ENCODE measurements at regions of chr19 and their contacts with region 1.

Region 1: DNA sequence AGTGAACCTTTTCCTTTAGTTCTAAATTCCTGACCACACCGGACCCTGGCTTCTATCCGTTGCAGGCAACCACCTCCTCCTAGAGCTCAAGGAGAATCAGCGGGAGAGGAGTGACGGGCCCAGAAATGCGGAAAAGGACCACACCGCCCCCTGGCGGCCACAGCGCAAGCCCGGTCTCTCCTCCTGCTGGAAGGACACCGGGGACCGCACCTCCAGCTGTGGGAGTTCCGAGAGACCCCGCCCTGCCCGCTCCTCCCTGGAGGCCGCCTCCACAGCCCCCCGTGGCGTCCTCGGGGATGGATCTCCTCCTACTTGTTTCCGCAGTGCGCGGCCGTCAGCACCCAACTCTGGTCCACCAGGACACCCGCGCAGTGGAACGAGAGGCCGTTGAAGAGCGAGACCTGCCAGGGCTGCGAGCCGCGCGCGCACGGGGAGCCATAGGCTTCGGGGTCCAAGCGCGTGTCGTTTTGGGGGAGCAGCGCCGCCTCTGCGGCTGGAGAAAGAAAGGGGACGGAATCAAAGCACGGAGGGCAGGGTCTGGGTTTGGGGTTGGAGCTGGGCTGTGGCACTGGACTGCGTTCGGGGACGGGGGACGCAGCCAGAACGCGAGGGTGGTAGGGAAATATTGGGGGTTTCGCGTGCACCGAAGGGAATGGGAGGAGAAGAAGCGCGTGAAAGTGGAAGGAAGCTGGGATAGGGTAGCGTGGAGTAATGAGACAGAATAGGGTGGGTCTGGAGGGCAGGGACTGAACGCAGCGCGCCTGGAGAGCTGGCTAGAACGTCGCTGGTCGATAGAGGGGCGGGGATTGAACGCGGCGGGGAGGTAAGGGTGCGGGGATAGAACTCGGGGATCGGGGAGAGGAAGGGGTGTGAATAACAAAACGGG is 2.5 kb downstream of the KLK10 start:
- DNase-seq: peak; percentile 87 to 98
- ATAC-seq: peak; percentile 63 to 84
- H3K4me3 ChIP-seq: peak overlapping the region; percentile 42
- H3K27ac ChIP-seq: peak overlapping the region in 1 of 2 experiments; percentile 27; a peak in 1 of 6 replicates
- H3K4me1 ChIP-seq: peaks cover 23% of the 10 kb centered on the region
- CTCF ChIP-seq: peak; percentile 84
- EP300 ChIP-seq: no peak
- POLR2A ChIP-seq: no peak
- RAD21 ChIP-seq: peak; percentile 84 to 89

Region 2: DNA sequence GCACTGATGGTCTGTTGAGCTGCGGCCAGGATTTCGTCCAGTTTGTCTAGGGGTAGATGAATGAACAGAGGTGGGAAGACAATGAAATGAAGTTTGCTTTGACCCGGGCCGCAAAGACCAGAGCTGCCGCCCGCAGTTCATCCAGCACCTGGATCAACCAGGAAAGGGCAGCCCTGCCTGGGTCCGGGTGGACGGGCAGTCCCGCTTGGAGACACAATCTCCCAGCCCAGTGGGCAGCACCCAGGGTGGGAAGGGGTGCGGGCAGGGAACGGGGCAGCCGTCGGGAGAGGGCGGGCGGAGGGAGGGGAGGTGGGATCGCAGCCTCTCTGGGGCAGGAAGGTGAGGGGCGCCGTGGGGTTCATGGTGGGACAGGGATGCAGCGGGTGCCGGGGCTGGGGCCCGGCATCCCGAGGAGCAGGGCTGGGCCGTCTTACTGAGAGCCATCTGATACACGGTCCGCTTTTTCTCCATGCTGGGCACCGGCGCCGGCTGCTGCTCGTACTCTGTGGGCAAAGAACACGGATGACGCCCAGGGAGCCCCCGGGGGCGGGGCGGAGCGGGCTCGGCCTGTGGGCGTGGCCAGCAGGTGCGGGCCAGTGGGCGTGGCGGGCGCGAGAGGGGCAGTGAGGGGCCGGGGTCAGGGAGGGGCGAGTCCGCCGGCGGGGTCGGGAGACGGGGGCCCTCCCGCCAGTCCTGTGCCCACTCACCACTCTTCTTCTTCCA is 330.6 kb before region 1 on chr19:
- CTCF ChIA-PET with region 1: no interaction called
- POLR2A ChIA-PET with region 1: no interaction called
- DNase-seq: no peak
- ATAC-seq: peak in 1 of 2 experiments; percentile 14; a peak in 1 of 6 replicates
- H3K4me3 ChIP-seq: 0 out of 3 replicates have a peak overlapping the region, but pooled peaks have one; percentile 12
- H3K27ac ChIP-seq: no peak overlapping the region
- H3K4me1 ChIP-seq: peaks cover 4% of the 10 kb centered on the region; the same call in 2 of the 3 replicates
- CTCF ChIP-seq: no peak
- EP300 ChIP-seq: no peak
- POLR2A ChIP-seq: no peak
- RAD21 ChIP-seq: no peak

Region 3: GRCh38 chr19:50750010-50750409 is 267.0 kb before region 1 on chr19:
- CTCF ChIA-PET with region 1: no interaction called
- POLR2A ChIA-PET with region 1: no interaction called
- DNase-seq: no peak
- ATAC-seq: no peak
- H3K4me3 ChIP-seq: no peak overlapping the region
- H3K27ac ChIP-seq: no peak overlapping the region
- H3K4me1 ChIP-seq: peaks cover 6% of the 10 kb centered on the region; the same call in 1 of the 3 replicates
- CTCF ChIP-seq: no peak
- EP300 ChIP-seq: no peak
- POLR2A ChIP-seq: no peak
- RAD21 ChIP-seq: no peak

Region 4: DNA sequence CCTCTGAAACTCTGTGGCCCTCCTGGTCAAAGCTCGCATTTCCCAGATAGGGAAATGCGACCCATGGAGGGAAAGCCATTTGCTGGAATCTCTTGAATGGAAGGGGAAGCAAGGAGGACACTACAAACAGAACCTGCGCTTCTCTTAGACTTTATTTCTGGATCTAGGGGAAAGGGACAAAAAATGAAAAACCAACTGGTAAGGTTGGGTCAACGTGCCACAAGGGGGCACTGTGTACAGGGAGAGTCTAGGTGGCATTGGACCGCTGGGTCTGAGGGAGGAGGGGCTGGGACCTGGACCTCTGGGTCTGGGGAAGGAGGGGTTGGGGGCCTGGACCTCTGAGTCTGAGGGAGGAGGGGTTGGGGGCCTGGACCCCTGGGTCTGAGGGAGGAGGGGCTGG is 110.8 kb before region 1 on chr19:
- CTCF ChIA-PET with region 1: no interaction called
- POLR2A ChIA-PET with region 1: no interaction called
- DNase-seq: peak; percentile 39 to 56
- ATAC-seq: 0 out of 6 replicates have a peak, but pooled peaks of 1 of the 2 experiments have one; percentile 26
- H3K4me3 ChIP-seq: no peak overlapping the region
- H3K27ac ChIP-seq: no peak overlapping the region
- H3K4me1 ChIP-seq: no peaks in the 10 kb centered on the region
- CTCF ChIP-seq: peak; percentile 45
- EP300 ChIP-seq: no peak
- POLR2A ChIP-seq: no peak
- RAD21 ChIP-seq: peak; percentile 16 to 49; a peak in 2 of 5 replicates

Region 5: DNA sequence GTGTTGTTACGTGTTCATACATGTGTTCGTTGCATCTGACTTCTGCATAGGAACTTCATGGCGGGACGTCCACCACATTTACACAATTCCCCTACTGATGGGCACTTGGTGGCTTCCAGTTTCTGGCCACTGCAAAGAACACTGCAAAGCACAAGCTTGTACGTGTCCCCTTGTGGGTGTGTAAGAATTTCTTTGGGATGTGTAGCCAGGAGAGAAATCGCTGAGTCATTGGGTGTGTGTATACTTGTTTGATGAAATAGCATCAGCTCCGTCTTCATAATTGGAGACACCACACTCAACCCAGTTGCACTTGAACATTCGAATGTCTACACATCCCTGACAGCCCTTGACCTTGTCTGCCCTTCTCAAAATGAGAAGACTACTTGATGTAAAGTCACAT is 83.4 kb before region 1 on chr19:
- CTCF ChIA-PET with region 1: interaction called, 30 read pairs
- POLR2A ChIA-PET with region 1: interaction called, 3 read pairs
- DNase-seq: peak in 1 of 2 experiments; percentile 84
- ATAC-seq: peak in 1 of 2 experiments; percentile 61; a peak in 3 of 6 replicates
- H3K4me3 ChIP-seq: no peak overlapping the region
- H3K27ac ChIP-seq: peak overlapping the region; percentile 64 to 82
- H3K4me1 ChIP-seq: peaks cover 12% of the 10 kb centered on the region
- CTCF ChIP-seq: no peak
- EP300 ChIP-seq: no peak
- POLR2A ChIP-seq: no peak
- RAD21 ChIP-seq: no peak

Region 6: GRCh38 chr19:50994129-50994528 is 22.9 kb before region 1 on chr19:
- CTCF ChIA-PET with region 1: interaction called, 11 read pairs
- POLR2A ChIA-PET with region 1: no interaction called
- DNase-seq: peak; percentile 65 to 75
- ATAC-seq: peak in 1 of 2 experiments; percentile 71; a peak in 3 of 6 replicates
- H3K4me3 ChIP-seq: no peak overlapping the region
- H3K27ac ChIP-seq: no peak overlapping the region
- H3K4me1 ChIP-seq: no peaks in the 10 kb centered on the region
- CTCF ChIP-seq: no peak
- EP300 ChIP-seq: no peak
- POLR2A ChIP-seq: no peak
- RAD21 ChIP-seq: no peak

Region 7: GRCh38 chr19:51029718-51030117 is 12.7 kb after region 1 on chr19:
- CTCF ChIA-PET with region 1: interaction called, 14 read pairs
- POLR2A ChIA-PET with region 1: no interaction called
- DNase-seq: peak in 1 of 2 experiments; percentile 39
- ATAC-seq: peak in 1 of 2 experiments; percentile 46; a peak in 3 of 6 replicates
- H3K4me3 ChIP-seq: no peak overlapping the region
- H3K27ac ChIP-seq: no peak overlapping the region
- H3K4me1 ChIP-seq: no peaks in the 10 kb centered on the region
- CTCF ChIP-seq: no peak
- EP300 ChIP-seq: no peak
- POLR2A ChIP-seq: no peak
- RAD21 ChIP-seq: no peak

Region 8: DNA sequence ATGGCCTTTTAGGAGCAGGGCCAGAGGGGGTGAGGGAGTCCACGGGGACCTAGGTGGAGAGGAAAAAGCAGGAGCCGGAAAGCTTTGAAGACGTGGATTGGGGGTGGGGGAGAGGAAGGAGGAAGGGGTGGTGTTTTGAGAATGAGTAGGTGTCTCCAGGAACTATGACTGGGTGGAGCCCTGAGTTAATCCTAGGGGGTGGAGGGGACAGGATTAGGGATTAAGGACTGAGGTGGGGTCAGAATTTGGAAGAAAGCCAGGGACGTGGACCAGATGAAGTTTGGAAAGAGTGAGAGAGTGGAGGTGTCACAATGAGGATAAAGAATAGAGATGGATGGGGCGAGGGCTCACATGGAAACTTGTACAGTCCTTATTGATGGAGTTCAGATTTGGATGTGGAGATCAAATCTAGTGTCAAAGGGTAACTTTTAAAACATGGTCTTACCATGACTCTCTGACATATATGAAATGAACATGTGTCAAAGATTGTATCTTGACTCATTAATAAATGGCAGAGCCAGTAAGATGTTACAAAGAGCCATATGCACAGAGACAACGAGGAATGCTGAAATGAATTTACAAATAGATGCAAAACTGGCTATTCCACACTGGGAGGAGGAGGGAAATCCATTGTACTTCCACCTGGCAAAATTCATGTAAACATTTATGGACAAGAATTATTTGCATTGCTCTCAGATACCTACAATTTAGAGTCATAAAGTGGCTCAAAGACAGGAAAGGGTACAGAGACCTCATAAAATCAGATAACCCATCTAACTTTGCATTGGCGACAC is 49.5 kb after region 1 on chr19:
- CTCF ChIA-PET with region 1: interaction called, 14 read pairs
- POLR2A ChIA-PET with region 1: no interaction called
- DNase-seq: no peak
- ATAC-seq: no peak
- H3K4me3 ChIP-seq: no peak overlapping the region
- H3K27ac ChIP-seq: no peak overlapping the region
- H3K4me1 ChIP-seq: peaks cover 4% of the 10 kb centered on the region; the same call in 1 of the 3 replicates
- CTCF ChIP-seq: no peak
- EP300 ChIP-seq: no peak
- POLR2A ChIP-seq: no peak
- RAD21 ChIP-seq: no peak

Region 9: GRCh38 chr19:51097166-51097738 is 80.2 kb after region 1 on chr19:
- CTCF ChIA-PET with region 1: interaction called, 147 read pairs
- POLR2A ChIA-PET with region 1: interaction called, 3 read pairs
- DNase-seq: peak; percentile 73 to 75
- ATAC-seq: peak; percentile 73 to 87
- H3K4me3 ChIP-seq: no peak overlapping the region
- H3K27ac ChIP-seq: no peak overlapping the region
- H3K4me1 ChIP-seq: peaks cover 10% of the 10 kb centered on the region; the same call in 1 of the 3 replicates
- CTCF ChIP-seq: peak; percentile 67
- EP300 ChIP-seq: no peak
- POLR2A ChIP-seq: no peak
- RAD21 ChIP-seq: peak; percentile 8 to 38; a peak in 2 of 5 replicates

Region 10: GRCh38 chr19:51168564-51169282 is 151.7 kb after region 1 on chr19:
- CTCF ChIA-PET with region 1: interaction called, 20 read pairs
- POLR2A ChIA-PET with region 1: no interaction called
- DNase-seq: no peak
- ATAC-seq: peak in 1 of 2 experiments; percentile 33; a peak in 3 of 6 replicates
- H3K4me3 ChIP-seq: no peak overlapping the region
- H3K27ac ChIP-seq: no peak overlapping the region
- H3K4me1 ChIP-seq: no peaks in the 10 kb centered on the region
- CTCF ChIP-seq: no peak
- EP300 ChIP-seq: no peak
- POLR2A ChIP-seq: no peak
- RAD21 ChIP-seq: no peak